Activated CD4-positive, alpha-beta memory T cell treated with anti-CD3 and anti-CD28 coated beads, Interleukin-2, amount 10 ng/mL, durations not matched to agents 7 days and 5 days (primary cell): ENCODE measurements at regions of chr11 and their contacts with region 1.

Region 1: DNA sequence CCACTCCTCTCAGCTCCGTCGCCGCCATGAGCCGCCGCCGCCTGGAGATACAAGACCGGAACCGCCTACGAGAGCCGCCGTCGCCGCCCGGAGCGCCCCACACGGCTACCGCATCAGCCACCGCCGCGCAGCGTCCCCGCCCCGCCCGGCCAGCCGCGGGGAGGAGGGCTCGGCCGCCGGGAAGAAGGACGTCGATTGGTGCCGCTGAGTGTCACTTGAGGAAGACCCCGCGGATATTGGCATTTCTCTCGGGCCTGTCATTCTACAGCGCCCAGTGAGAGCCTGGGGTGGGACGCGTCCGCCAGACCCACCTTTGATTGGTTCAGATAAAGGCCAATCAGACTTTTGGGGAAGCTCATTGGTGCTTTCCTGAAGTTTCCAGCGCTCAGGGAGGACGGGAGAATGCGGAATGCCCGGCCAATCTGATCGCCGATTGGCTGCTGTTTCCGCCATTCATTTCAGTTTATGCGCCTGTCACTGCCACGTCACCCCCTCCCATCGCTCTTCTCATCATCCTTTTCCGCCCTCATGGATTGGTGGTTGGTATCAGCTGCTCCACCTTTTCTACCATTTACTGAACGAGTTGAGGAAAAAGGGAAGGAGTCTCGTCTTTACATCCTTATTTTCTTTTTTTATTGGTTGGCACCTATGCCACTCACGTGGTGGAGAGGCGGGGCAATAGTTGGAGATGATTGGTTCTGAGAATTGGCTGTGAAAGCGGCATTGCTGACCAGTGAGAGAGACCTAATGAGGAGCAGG is at the start of gene OSBP:
- DNase-seq: peak; percentile 99
- H3K4me3 Mint-ChIP-seq: peak within 1 kb of the TSS; percentile 82
- H3K27ac Mint-ChIP-seq: peak within 1 kb of the TSS; percentile 89
- H3K4me1 Mint-ChIP-seq: peaks cover 51% of the 10 kb centered on the region
- H3K27me3 Mint-ChIP-seq: no peaks in the 10 kb centered on the region
- total RNA-seq, gene OSBP: 40.4 to 41.5 TPM

Region 2: GRCh38 chr11:59542142-59542810 is 73.5 kb before region 1 on chr11:
- CTCF ChIA-PET with region 1: interaction called, 10 read pairs
- POLR2A ChIA-PET with region 1: no interaction called
- DNase-seq: no peak
- H3K4me3 Mint-ChIP-seq: no peak overlapping the region
- H3K27ac Mint-ChIP-seq: no peak overlapping the region
- H3K4me1 Mint-ChIP-seq: peaks cover 17% of the 10 kb centered on the region
- H3K27me3 Mint-ChIP-seq: peaks cover 4% of the 10 kb centered on the region

Region 3: GRCh38 chr11:59560702-59561469 is 54.9 kb before region 1 on chr11:
- CTCF ChIA-PET with region 1: interaction called, 4 read pairs
- POLR2A ChIA-PET with region 1: interaction called, 23 read pairs
- DNase-seq: peak; percentile 81
- H3K4me3 Mint-ChIP-seq: peak overlapping the region; percentile 83
- H3K27ac Mint-ChIP-seq: peak overlapping the region; percentile 88
- H3K4me1 Mint-ChIP-seq: peaks cover 49% of the 10 kb centered on the region
- H3K27me3 Mint-ChIP-seq: peaks cover 5% of the 10 kb centered on the region

Region 4: GRCh38 chr11:59601788-59602187 is 14.0 kb before region 1 on chr11:
- CTCF ChIA-PET with region 1: interaction called, 5 read pairs
- POLR2A ChIA-PET with region 1: interaction called, 14 read pairs
- DNase-seq: no peak
- H3K4me3 Mint-ChIP-seq: no peak overlapping the region
- H3K27ac Mint-ChIP-seq: no peak overlapping the region
- H3K4me1 Mint-ChIP-seq: peaks cover 7% of the 10 kb centered on the region
- H3K27me3 Mint-ChIP-seq: no peaks in the 10 kb centered on the region

Region 5: DNA sequence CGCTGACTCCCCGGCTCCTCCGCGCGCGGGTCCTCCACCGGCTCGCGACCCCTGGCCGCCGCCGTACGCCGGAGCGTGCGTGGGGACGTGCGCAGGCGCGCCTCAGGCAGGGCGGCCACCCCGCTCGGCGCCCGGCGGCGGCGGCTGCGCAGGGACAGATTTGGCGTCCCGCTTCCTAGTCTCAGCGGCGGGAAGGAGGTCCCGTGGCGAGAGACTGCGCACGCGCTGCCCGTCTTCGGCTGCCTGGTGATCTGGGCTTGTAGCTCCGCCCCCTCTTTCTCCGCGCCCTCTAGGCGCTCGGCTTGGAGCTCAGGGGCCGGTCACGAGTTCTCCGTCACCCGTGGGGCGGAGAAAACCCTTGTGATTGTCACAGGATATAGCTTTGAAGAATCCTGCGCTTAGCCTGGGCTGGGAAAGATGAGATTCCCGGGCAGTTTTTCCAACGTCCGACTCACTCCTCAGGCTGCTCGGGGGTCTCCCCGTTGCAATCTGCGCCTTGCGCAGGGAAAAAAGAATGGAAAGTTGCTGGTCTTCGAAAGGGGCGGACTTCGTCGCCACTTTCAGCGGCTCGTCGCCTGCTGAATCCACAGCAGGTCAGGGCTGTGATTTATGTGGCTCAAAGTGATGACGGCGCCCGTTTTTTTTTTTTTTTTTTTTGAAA is 53.3 kb after region 1 on chr11 and contains the start of gene PATL1:
- CTCF ChIA-PET with region 1: interaction called, 6 read pairs
- POLR2A ChIA-PET with region 1: interaction called, 64 read pairs
- DNase-seq: peak; percentile 99
- H3K4me3 Mint-ChIP-seq: peak within 1 kb of the TSS; percentile 95
- H3K27ac Mint-ChIP-seq: peak within 1 kb of the TSS; percentile 98
- H3K4me1 Mint-ChIP-seq: peaks cover 44% of the 10 kb centered on the region
- H3K27me3 Mint-ChIP-seq: no peaks in the 10 kb centered on the region
- total RNA-seq, gene PATL1: 56.4 to 56.8 TPM

Region 6: DNA sequence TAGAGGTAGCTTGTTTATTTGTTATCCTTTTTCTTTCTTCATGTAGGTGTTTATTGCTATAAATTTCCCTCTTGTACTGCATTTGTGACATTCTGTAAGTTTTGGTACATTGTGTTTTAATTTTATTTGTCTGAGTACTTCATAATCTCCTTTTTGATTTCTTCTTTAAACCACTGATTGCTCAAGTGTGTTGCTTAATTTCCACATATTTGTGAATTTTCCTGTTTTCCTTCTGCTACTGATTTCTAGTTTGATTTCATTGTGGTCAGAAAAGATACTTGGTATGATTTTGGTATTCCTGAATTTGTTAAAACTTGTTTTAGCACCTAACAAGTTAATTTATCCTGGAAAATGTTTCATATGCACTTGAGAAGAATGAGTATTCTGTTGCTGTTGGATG is 82.7 kb after region 1 on chr11:
- CTCF ChIA-PET with region 1: no interaction called
- POLR2A ChIA-PET with region 1: no interaction called
- DNase-seq: no peak
- H3K4me3 Mint-ChIP-seq: no peak overlapping the region
- H3K27ac Mint-ChIP-seq: no peak overlapping the region
- H3K4me1 Mint-ChIP-seq: no peaks in the 10 kb centered on the region
- H3K27me3 Mint-ChIP-seq: peaks cover 33% of the 10 kb centered on the region

Region 7: GRCh38 chr11:59719556-59719955 is 103.7 kb after region 1 on chr11:
- CTCF ChIA-PET with region 1: no interaction called
- POLR2A ChIA-PET with region 1: no interaction called
- DNase-seq: no peak
- H3K4me3 Mint-ChIP-seq: no peak overlapping the region
- H3K27ac Mint-ChIP-seq: no peak overlapping the region
- H3K4me1 Mint-ChIP-seq: no peaks in the 10 kb centered on the region
- H3K27me3 Mint-ChIP-seq: peaks cover 44% of the 10 kb centered on the region

Region 8: DNA sequence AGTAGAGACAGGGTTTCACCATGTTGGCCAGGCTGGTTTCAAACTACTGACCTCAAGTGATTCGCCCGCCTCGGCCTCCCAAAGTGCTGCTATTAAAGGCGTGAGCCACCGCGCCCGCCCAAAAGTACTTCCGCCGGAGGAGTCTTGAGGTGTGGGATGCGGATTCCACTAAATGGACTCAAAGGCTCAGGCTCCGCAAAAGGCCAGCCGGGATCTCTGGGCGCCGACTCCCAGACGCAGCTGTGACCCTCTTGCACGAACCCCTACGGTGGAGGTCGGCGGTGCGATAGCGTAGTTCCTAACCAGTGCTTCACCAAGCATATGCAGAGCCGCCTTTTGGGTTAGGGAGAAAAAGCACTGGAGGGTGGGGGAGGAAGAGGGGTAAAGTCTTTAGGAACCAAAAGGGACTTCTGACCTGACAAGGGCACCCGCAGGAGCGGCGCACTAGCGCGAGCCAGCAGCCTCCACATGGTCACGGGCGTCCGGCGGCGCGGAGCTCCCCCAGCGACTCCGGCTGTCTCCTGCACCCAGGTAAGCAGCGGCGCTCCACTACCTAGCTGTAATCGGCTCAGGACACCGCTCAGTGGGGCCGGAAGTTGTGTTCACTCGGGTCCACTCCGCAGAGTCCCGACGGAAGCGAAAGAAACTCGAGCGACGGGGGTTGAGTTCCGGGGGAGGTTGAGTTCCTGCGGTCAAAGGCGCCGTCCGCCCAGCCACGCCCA is 194.5 kb after region 1 on chr11 and contains the start of gene MRPL16:
- CTCF ChIA-PET with region 1: interaction called, 4 read pairs
- POLR2A ChIA-PET with region 1: interaction called, 18 read pairs
- DNase-seq: peak; percentile 93
- H3K4me3 Mint-ChIP-seq: peak within 1 kb of the TSS; percentile 90
- H3K27ac Mint-ChIP-seq: peak within 1 kb of the TSS; percentile 91
- H3K4me1 Mint-ChIP-seq: peaks cover 48% of the 10 kb centered on the region
- H3K27me3 Mint-ChIP-seq: no peaks in the 10 kb centered on the region
- total RNA-seq, gene MRPL16: 77.0 to 77.7 TPM